Right ventricle myocardium superior (tissue), 1 donor: ENCODE measurements at regions of chr3 and their contacts with region 1.

Region 1: GRCh38 chr3:21752749-21753347 is 1.8 kb upstream of the ZNF385D start:
- DNase-seq: no peak
- ATAC-seq: peak; percentile 80

Region 2: GRCh38 chr3:21017115-21017852 is 735.6 kb before region 1 on chr3:
- intact Hi-C with region 1: no loop called
- DNase-seq: no peak
- ATAC-seq: no peak

Region 3: DNA sequence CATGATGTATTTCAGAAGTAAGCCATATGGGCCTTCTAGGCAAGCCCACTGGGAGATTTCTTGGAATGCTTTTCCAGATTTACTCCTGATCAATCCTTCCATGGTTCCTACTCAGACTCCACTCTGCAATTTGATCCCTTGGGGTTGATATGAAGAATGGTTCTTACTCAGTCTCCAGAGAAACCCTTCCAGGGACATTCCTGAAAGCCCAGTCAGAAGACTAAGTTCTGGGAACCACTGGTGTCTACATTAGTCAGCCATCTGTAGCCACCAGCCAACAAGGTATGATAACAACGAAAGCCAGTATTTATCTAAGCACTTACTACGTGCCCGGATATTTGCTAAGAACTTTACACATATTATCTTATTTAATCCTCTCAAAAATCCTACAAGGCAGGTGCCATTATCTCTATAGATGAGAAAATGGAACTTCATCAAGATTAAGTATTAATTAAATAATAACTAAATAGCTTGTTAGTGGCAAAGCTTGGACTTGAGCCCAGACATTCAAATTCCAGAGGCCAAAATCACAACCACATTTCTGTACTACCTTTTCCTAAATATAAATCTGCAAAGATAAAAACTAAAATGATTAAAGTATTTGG is 34.6 kb before region 1 on chr3:
- intact Hi-C with region 1: no loop called
- DNase-seq: no peak
- ATAC-seq: no peak

Region 4: DNA sequence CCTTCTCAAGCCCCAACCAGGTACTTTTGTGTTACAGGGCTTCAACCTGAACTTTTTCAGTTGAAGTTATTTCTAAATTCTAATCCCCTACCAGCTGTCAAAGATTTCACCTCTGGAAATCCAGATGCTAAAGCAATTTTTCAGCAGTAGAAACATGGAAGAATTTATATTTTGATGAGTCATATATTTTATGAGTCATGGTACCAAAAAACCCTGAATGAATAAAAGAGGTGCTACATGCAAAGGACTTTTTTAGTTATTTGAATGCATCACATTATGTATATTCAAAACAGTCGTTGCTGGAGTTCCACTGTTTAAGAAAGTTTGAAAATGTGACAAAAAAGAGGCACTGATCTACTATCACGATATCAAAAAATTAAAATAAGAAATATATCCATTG is 94.2 kb after region 1 on chr3:
- intact Hi-C with region 1: loop called (anchors 10 kb)
- DNase-seq: no peak
- ATAC-seq: no peak

Region 5: GRCh38 chr3:21894459-21895340 is 141.9 kb after region 1 on chr3:
- intact Hi-C with region 1: loop called (anchors 5 kb)
- DNase-seq: no peak
- ATAC-seq: peak; percentile 78